BJ (cell line): ENCODE measurements at regions of chr15 and their contacts with region 1.

Region 1: GRCh38 chr15:62782039-62782791 is 260.3 kb upstream of the TPM1 start:
- DNase-seq: no peak
- H3K4me3 ChIP-seq: no peak overlapping the region
- H3K27me3 ChIP-seq: no peaks in the 10 kb centered on the region
- CTCF ChIP-seq: peak; percentile 71

Region 2: GRCh38 chr15:62770752-62771151 is 11.5 kb before region 1 on chr15:
- CTCF ChIA-PET with region 1: interaction called, 8 read pairs
- POLR2A ChIA-PET with region 1: interaction called, 10 read pairs
- DNase-seq: peak; percentile 68
- H3K4me3 ChIP-seq: no peak overlapping the region
- H3K27me3 ChIP-seq: no peaks in the 10 kb centered on the region
- CTCF ChIP-seq: 0 out of 2 replicates have a peak, but pooled peaks have one; percentile 2

Region 3: GRCh38 chr15:63093486-63094205 is 311.4 kb after region 1 on chr15:
- CTCF ChIA-PET with region 1: interaction called, 14 read pairs
- POLR2A ChIA-PET with region 1: no interaction called
- DNase-seq: no peak
- H3K4me3 ChIP-seq: no peak overlapping the region
- H3K27me3 ChIP-seq: no peaks in the 10 kb centered on the region
- CTCF ChIP-seq: peak; percentile 88

Region 4: GRCh38 chr15:63104727-63105126 is 322.5 kb after region 1 on chr15:
- CTCF ChIA-PET with region 1: no interaction called
- POLR2A ChIA-PET with region 1: no interaction called
- DNase-seq: no peak
- H3K4me3 ChIP-seq: no peak overlapping the region
- H3K27me3 ChIP-seq: no peaks in the 10 kb centered on the region
- CTCF ChIP-seq: no peak